Heart right ventricle (tissue), 16 donors: ENCODE measurements at regions of chr2 and their contacts with region 1.

Region 1: GRCh38 chr2:199979832-199980628 is 24.6 kb downstream of the MAIP1 start:
- DNase-seq: peak; percentile 84 to 87
- ATAC-seq: peak; percentile 37 to 84 (median 74)
- H3K4me3 ChIP-seq: peak overlapping the region in 6 of 10 donors; percentile 6 to 33 (median 24)
- H3K27ac ChIP-seq: no peak overlapping the region
- H3K4me1 ChIP-seq: peaks cover 0 to 12% (median 4%) of the 10 kb centered on the region in 9 donors
- H3K27me3 ChIP-seq: no peaks in the 10 kb centered on the region
- CTCF ChIP-seq: peak; percentile 69 to 92 (median 91)

Region 2: GRCh38 chr2:199092419-199092818 is 887.6 kb before region 1 on chr2:
- intact Hi-C with region 1: no loop called
- DNase-seq: no peak
- ATAC-seq: no peak
- H3K4me3 ChIP-seq: no peak overlapping the region
- H3K27ac ChIP-seq: no peak overlapping the region
- H3K4me1 ChIP-seq: no peaks in the 10 kb centered on the region
- H3K27me3 ChIP-seq: no peaks in the 10 kb centered on the region
- CTCF ChIP-seq: no peak

Region 3: GRCh38 chr2:199940373-199940772 is 39.7 kb before region 1 on chr2:
- intact Hi-C with region 1: no loop called
- DNase-seq: no peak
- ATAC-seq: no peak
- H3K4me3 ChIP-seq: no peak overlapping the region
- H3K27ac ChIP-seq: no peak overlapping the region
- H3K4me1 ChIP-seq: no peaks in the 10 kb centered on the region
- H3K27me3 ChIP-seq: no peaks in the 10 kb centered on the region
- CTCF ChIP-seq: peak in 5 of 9 donors; percentile 7 to 25 (median 22)

Region 4: DNA sequence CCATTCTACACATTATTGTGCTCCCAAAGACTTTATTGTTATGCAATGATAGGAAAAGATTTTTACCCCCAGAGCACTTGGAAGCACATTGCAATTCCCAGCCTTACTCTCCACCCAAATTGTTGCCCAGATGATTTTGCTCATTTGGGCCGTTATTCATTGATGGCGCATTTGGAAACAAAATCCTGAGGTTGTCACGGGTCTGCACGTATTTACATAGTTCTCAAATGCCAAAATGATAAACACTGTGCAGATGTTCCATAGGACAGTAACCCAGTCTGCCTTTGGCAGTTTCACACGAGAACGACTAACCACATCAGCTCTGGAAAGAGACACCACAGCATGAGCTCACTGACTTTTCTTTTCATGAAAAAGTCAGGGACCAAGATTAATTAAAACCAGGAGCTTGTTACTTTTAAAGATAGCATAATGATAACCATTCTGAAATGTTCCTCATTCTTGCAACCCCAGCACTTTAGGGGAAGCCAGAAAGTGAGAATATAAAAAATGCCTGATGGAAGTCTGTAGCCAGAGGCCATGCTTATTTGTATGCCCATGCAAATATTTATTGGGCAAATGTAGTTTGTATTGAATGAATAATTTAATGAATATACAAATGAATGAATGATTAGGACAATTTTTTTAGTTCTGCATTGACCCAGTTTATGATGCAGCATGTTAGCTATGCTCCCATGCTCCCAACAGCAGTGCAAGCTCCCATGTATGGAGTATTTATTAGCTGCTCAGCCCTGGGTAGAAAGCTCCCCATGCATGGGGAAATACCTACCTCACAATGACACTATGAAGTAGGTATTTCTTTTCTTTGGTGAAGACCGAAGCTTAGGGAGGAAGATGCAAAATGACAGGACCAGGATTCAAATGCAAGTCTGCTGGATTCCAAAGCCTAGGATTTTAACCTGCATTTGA is 60.0 kb after region 1 on chr2:
- intact Hi-C with region 1: no loop called
- DNase-seq: no peak
- ATAC-seq: peak in 2 of 8 donors; percentile 27 to 47
- H3K4me3 ChIP-seq: no peak overlapping the region
- H3K27ac ChIP-seq: no peak overlapping the region
- H3K4me1 ChIP-seq: no peaks in the 10 kb centered on the region
- H3K27me3 ChIP-seq: no peaks in the 10 kb centered on the region
- CTCF ChIP-seq: no peak

Region 5: DNA sequence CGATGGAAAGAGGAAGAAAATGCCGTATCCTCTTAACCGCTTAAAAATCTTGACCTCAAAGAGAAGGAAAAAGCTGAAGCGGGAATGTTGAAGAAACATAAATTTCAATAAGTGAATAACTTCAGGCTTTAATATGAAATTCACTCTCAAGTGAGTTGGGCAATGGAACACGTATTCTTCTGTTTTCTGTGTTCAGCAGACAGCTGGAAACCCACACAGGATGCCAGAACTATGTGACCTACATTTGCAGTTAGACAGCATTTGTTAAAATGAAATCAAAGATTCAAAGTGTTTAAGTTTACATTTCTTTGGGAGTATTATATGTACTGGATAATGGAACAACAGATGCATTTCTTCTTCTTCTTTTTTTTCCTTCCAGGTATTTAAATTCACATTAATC is 245.9 kb after region 1 on chr2:
- intact Hi-C with region 1: no loop called
- DNase-seq: no peak
- ATAC-seq: peak in 6 of 8 donors; percentile 46 to 75 (median 68)
- H3K4me3 ChIP-seq: no peak overlapping the region
- H3K27ac ChIP-seq: peak overlapping the region in 3 of 10 donors; percentile 16 to 44 (median 35)
- H3K4me1 ChIP-seq: peaks cover 4 to 37% (median 15%) of the 10 kb centered on the region in 9 donors
- H3K27me3 ChIP-seq: no peaks in the 10 kb centered on the region
- CTCF ChIP-seq: no peak

Region 6: DNA sequence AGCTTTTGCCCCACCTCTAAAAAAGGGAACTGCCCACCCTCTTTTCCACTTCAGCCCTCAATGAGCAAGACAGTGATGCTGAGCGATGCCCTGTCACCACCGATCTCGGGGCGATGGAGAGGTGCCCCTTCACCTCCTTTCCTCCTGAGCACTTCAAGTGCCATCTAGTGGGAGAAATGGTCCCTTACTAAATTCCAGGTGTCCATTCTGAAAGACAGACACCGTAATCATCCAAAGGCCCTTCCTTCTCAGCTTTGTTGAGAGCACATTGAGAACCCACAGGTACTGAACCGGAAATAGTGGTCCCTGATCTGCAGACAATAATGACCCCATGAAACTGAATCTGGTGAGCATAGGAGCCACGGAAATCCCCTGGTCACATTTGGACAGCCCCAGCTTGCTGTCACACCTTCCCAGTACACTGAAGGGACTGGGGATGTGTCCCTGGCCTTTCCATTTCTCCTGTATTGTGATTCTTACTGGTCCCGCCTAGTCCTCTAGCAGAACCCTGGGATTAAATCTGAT is 491.4 kb after region 1 on chr2:
- intact Hi-C with region 1: loop called in 1 of 10 experiments (anchors 5 kb)
- DNase-seq: no peak
- ATAC-seq: no peak
- H3K4me3 ChIP-seq: no peak overlapping the region
- H3K27ac ChIP-seq: no peak overlapping the region
- H3K4me1 ChIP-seq: peaks cover 0 to 13% (median 0%) of the 10 kb centered on the region in 9 donors
- H3K27me3 ChIP-seq: no peaks in the 10 kb centered on the region
- CTCF ChIP-seq: peak in 8 of 9 donors; percentile 23 to 61 (median 50)

Region 7: GRCh38 chr2:200483729-200484198 is 503.7 kb after region 1 on chr2:
- intact Hi-C with region 1: loop called in 8 of 10 experiments (anchors 1 to 5 kb)
- DNase-seq: no peak
- ATAC-seq: peak in 2 of 8 donors; percentile 29 to 36
- H3K4me3 ChIP-seq: no peak overlapping the region
- H3K27ac ChIP-seq: no peak overlapping the region
- H3K4me1 ChIP-seq: peaks cover 0 to 5% (median 0%) of the 10 kb centered on the region in 9 donors
- H3K27me3 ChIP-seq: no peaks in the 10 kb centered on the region
- CTCF ChIP-seq: peak in 7 of 9 donors; percentile 12 to 47 (median 28)

Region 8: DNA sequence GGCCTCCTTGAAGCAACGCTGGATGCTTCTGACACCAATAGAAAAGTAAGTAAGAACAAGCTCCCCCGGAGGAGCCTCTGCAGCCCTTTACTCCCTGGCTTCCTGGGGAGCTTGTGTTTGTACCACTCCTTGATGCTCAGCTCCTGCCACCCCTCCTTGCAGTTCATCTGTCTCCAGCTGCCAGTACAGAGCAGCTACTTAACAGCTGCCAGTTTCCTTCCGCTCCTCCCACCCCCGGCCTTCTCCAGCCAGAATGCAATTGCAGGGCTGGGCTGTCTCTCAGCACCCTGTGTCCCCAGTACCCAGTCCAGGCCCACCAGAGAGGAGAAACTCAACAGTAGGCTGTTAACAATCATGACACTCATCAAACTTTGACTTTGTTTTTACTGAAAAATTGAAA is 715.2 kb after region 1 on chr2:
- intact Hi-C with region 1: loop called in 8 of 10 experiments (anchors 5 to 10 kb)
- DNase-seq: peak; percentile 13 to 32
- ATAC-seq: peak in 7 of 8 donors; percentile 56 to 90 (median 67)
- H3K4me3 ChIP-seq: no peak overlapping the region
- H3K27ac ChIP-seq: peak overlapping the region in 1 of 10 donors; percentile 20
- H3K4me1 ChIP-seq: peaks cover 0 to 14% (median 0%) of the 10 kb centered on the region in 9 donors
- H3K27me3 ChIP-seq: no peaks in the 10 kb centered on the region
- CTCF ChIP-seq: no peak